PC-3 (cell line): ENCODE measurements at regions of chr1 and their contacts with region 1.

Region 1: GRCh38 chr1:227372726-227373130 is 54.4 kb upstream of the CDC42BPA start:
- DNase-seq: peak; percentile 98
- ATAC-seq: peak; percentile 60
- H3K4me3 ChIP-seq: no peak overlapping the region
- H3K27ac ChIP-seq: peak overlapping the region; percentile 35
- H3K4me1 ChIP-seq: peaks cover 46% of the 10 kb centered on the region
- H3K27me3 ChIP-seq: no peaks in the 10 kb centered on the region
- CTCF ChIP-seq: no peak

Region 2: DNA sequence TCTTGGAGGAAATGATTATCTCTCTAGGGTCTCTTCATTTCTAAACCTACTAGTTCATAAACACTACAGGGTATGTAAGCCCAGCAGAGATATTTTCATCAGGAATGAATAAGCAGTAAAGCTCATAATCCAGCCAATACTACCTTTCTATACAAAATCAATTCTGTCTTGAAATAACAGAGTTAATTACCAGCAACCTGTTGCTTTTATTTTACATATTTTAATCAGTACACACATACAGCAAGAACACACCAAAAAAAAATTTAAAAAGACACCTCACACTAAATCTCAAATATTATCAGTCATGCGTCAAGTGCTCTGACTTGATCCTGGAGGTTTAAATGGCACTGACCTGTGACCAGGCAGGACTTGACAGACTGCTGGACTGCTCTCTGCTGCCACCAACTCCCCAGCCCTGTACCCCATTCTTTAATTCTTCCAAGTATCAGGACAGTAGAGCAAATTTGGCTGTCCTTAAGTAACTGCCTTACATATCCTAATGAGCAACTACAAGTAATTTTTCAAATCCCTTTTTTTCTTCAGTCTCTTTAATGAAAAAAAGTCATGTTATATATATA is 152.9 kb before region 1 on chr1:
- CTCF ChIA-PET with region 1: no interaction called
- POLR2A ChIA-PET with region 1: no interaction called
- intact Hi-C with region 1: no loop called
- DNase-seq: no peak
- ATAC-seq: no peak
- H3K4me3 ChIP-seq: no peak overlapping the region
- H3K27ac ChIP-seq: no peak overlapping the region
- H3K4me1 ChIP-seq: peaks cover 18% of the 10 kb centered on the region
- H3K27me3 ChIP-seq: no peaks in the 10 kb centered on the region
- CTCF ChIP-seq: 0 out of 2 replicates have a peak, but pooled peaks have one; percentile 26

Region 3: DNA sequence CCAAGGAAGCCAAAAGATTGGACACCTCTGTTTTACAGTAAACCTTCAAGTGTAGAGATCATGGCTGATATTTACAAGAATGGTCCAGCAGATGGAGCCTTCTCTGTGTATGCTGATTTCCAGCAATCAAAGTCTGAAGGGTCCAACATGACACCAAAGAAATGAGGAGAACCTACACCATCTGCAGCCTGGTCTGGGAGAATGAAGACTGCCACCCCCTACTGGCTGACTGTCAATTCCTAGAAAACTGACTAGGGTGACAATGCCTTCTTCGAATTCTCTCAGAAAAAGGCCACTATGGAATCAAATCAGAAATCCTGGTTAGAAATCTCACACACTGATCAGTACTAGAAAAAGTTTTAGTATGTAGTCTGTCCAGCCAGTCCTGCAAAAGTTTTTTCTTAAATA is 137.7 kb before region 1 on chr1:
- CTCF ChIA-PET with region 1: no interaction called
- POLR2A ChIA-PET with region 1: no interaction called
- intact Hi-C with region 1: loop called (anchors 5 kb)
- DNase-seq: peak; percentile 95
- ATAC-seq: peak; percentile 97
- H3K4me3 ChIP-seq: no peak overlapping the region
- H3K27ac ChIP-seq: no peak overlapping the region
- H3K4me1 ChIP-seq: no peaks in the 10 kb centered on the region
- H3K27me3 ChIP-seq: no peaks in the 10 kb centered on the region
- CTCF ChIP-seq: peak; percentile 98

Region 4: DNA sequence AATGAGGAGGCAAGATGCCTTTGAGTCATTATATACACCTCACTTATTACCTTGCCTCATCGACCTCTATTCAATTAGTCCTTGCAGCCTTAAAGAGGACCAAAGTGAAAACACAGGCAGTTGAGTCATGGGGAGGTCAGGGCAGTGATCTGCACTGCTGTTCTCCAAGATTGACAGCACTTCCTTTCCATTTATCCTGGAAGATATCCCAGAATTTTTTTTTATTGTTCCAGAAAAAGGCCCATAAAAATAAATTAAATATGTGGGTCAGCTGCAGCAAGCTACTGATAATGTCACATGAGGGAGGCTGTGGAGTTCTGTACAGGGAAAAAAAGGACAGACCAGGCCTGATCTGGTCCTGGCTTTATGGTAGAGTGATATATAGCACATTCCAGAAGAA is 21.3 kb before region 1 on chr1:
- CTCF ChIA-PET with region 1: no interaction called
- POLR2A ChIA-PET with region 1: interaction called, 13 read pairs
- intact Hi-C with region 1: loop called (anchors 1 kb)
- DNase-seq: peak; percentile 93
- ATAC-seq: peak; percentile 93
- H3K4me3 ChIP-seq: no peak overlapping the region
- H3K27ac ChIP-seq: no peak overlapping the region
- H3K4me1 ChIP-seq: peaks cover 19% of the 10 kb centered on the region
- H3K27me3 ChIP-seq: no peaks in the 10 kb centered on the region
- CTCF ChIP-seq: no peak

Region 5: GRCh38 chr1:227357171-227357880 is 15.4 kb before region 1 on chr1:
- CTCF ChIA-PET with region 1: no interaction called
- POLR2A ChIA-PET with region 1: interaction called, 13 read pairs
- intact Hi-C with region 1: loop called (anchors 1 kb)
- DNase-seq: peak; percentile 96
- ATAC-seq: peak; percentile 95
- H3K4me3 ChIP-seq: peak overlapping the region; percentile 39
- H3K27ac ChIP-seq: peak overlapping the region; percentile 85
- H3K4me1 ChIP-seq: peaks cover 28% of the 10 kb centered on the region
- H3K27me3 ChIP-seq: no peaks in the 10 kb centered on the region
- CTCF ChIP-seq: no peak

Region 6: GRCh38 chr1:227388214-227389173 is 15.8 kb after region 1 on chr1:
- CTCF ChIA-PET with region 1: no interaction called
- POLR2A ChIA-PET with region 1: interaction called, 3 read pairs
- intact Hi-C with region 1: loop called (anchors 1 kb)
- DNase-seq: peak; percentile 80
- ATAC-seq: peak; percentile 84
- H3K4me3 ChIP-seq: no peak overlapping the region; the same call in 1 of the 2 replicates
- H3K27ac ChIP-seq: peak overlapping the region; percentile 15
- H3K4me1 ChIP-seq: peaks cover 13% of the 10 kb centered on the region
- H3K27me3 ChIP-seq: no peaks in the 10 kb centered on the region
- CTCF ChIP-seq: no peak

Region 7: GRCh38 chr1:227428803-227429202 is 56.1 kb after region 1 on chr1:
- CTCF ChIA-PET with region 1: no interaction called
- POLR2A ChIA-PET with region 1: no interaction called
- intact Hi-C with region 1: no loop called
- DNase-seq: peak; percentile 86
- ATAC-seq: peak; percentile 43
- H3K4me3 ChIP-seq: no peak overlapping the region
- H3K27ac ChIP-seq: peak overlapping the region; percentile 24
- H3K4me1 ChIP-seq: peaks cover 22% of the 10 kb centered on the region
- H3K27me3 ChIP-seq: no peaks in the 10 kb centered on the region
- CTCF ChIP-seq: no peak